B cell (primary cell): ENCODE measurements at regions of chr11 and their contacts with region 1.

Region 1: DNA sequence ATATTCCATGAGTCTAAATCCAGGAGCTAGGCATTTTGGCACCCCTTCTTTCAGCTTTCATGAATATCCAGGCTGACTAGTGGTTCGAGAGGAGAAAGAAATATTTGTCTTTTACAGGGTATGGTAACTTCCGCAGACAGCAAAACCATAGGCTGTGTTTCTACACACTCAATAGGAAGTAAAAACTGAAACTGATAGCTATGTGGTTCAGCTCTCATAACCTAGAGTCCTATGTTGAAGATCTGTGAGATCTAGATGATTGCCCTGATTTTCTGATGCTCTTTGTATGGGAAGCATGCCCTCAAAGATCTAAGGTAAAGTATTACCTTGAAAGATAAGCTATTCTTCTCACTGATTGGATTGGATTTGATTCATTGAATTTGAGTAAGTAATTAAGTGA is 118.3 kb downstream of the CD44 start:
- DNase-seq: peak; percentile 61
- ATAC-seq: peak; percentile 71
- H3K4me3 ChIP-seq: peak overlapping the region in 2 of 5 experiments; percentile 36 to 59
- H3K4me3 Mint-ChIP-seq: peak overlapping the region; percentile 46
- H3K27ac ChIP-seq: peak overlapping the region; percentile 56 to 63
- H3K27ac Mint-ChIP-seq: peak overlapping the region; percentile 54
- H3K4me1 ChIP-seq: peaks cover 12 to 13% of the 10 kb centered on the region in 2 donors
- H3K4me1 Mint-ChIP-seq: peaks cover 16% of the 10 kb centered on the region
- H3K27me3 ChIP-seq: no peaks in the 10 kb centered on the region
- H3K27me3 Mint-ChIP-seq: no peaks in the 10 kb centered on the region
- CTCF ChIP-seq: no peak

Region 2: GRCh38 chr11:35237860-35238715 is 19.2 kb before region 1 on chr11:
- CTCF ChIA-PET with region 1: interaction called, 6 read pairs
- POLR2A ChIA-PET with region 1: interaction called, 3 read pairs
- intact Hi-C with region 1: loop called (anchors 2 kb)
- DNase-seq: peak; percentile 81
- ATAC-seq: no peak
- H3K4me3 ChIP-seq: no peak overlapping the region
- H3K4me3 Mint-ChIP-seq: no peak overlapping the region
- H3K27ac ChIP-seq: no peak overlapping the region
- H3K27ac Mint-ChIP-seq: no peak overlapping the region
- H3K4me1 ChIP-seq: peaks cover 6 to 11% of the 10 kb centered on the region in 2 donors
- H3K4me1 Mint-ChIP-seq: peaks cover 22% of the 10 kb centered on the region
- H3K27me3 ChIP-seq: no peaks in the 10 kb centered on the region
- H3K27me3 Mint-ChIP-seq: no peaks in the 10 kb centered on the region
- CTCF ChIP-seq: peak; percentile 90

Region 3: DNA sequence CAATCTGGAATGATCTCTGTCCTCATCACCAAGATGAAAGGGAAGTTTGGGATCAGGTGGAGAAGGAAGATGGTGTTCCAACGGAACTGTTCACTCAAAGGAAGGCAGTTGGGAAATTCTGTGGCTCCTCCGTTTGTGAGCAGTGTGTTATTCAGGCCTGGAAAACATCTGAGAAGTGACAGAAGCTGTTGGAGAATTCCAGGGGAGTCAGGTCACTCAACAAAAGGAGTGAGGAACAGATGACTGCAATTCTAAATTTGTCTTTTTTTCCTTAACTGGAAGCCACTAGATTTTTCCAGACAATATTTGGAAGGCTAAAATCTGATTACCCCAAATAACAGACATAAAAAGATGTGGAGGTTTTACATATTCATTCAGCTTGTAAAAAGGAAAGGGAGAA is 10.5 kb before region 1 on chr11:
- CTCF ChIA-PET with region 1: interaction called, 10 read pairs
- POLR2A ChIA-PET with region 1: no interaction called
- intact Hi-C with region 1: loop called (anchors 2 kb)
- DNase-seq: no peak
- ATAC-seq: no peak
- H3K4me3 ChIP-seq: no peak overlapping the region
- H3K4me3 Mint-ChIP-seq: no peak overlapping the region
- H3K27ac ChIP-seq: no peak overlapping the region
- H3K27ac Mint-ChIP-seq: no peak overlapping the region
- H3K4me1 ChIP-seq: no peaks in the 10 kb centered on the region
- H3K4me1 Mint-ChIP-seq: no peaks in the 10 kb centered on the region
- H3K27me3 ChIP-seq: no peaks in the 10 kb centered on the region
- H3K27me3 Mint-ChIP-seq: peaks cover 2% of the 10 kb centered on the region
- CTCF ChIP-seq: no peak

Region 4: DNA sequence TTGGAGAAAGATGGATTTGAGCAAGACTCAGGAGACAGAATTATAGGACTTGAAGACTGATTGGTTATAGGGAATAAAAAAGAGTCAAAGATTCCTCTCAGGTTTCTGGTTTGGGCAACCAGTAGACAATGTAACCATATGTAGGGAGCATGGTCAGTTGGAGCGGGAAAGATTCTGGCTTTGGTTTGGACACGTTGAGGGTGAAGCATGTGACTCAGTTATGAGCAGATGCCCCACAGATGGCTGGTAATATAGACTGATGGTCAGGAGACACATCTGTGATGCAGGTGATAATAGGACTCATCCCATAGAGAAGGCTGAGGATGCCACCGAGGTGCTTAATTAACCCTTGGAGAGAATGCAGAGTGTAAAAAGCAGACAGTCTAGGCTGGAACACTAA is 13.8 kb after region 1 on chr11:
- CTCF ChIA-PET with region 1: interaction called, 3 read pairs
- POLR2A ChIA-PET with region 1: no interaction called
- intact Hi-C with region 1: loop called (anchors 1 kb)
- DNase-seq: no peak
- ATAC-seq: no peak
- H3K4me3 ChIP-seq: no peak overlapping the region
- H3K4me3 Mint-ChIP-seq: no peak overlapping the region
- H3K27ac ChIP-seq: no peak overlapping the region
- H3K27ac Mint-ChIP-seq: no peak overlapping the region
- H3K4me1 ChIP-seq: peaks cover 16 to 17% of the 10 kb centered on the region in 2 donors
- H3K4me1 Mint-ChIP-seq: peaks cover 34% of the 10 kb centered on the region
- H3K27me3 ChIP-seq: no peaks in the 10 kb centered on the region
- H3K27me3 Mint-ChIP-seq: no peaks in the 10 kb centered on the region
- CTCF ChIP-seq: no peak

Region 5: DNA sequence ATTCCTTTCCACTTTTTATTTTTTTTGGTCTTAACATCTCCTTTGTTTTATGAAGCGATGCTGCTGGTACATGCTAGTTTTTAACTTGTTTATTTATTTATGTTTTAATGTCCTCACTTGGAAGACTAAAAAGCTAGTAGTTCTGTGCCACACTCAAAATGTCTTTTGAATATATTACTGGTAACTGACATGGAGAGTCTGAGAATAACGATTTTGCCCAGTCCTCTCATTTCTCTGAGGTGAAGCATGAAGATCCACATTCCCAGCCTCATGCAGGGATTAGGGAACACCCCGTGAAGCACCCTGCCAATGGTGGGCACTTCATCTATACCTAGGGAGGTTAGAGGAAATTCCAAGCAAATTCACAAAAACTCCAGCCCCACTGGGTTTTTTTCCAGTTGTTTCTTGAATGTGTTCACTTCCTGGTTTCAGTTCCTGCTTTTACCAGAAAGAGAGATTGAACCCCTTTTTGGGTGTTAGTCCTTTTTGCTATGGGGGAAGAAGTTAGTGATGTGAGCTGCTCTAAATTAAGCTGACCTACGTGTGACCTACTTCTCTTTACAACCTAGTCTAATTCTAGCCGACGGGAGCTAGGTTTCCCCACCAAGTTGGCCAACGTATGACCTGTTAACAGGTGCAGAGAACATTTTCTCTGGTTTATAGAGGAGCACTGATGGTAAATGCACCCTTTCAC is 55.9 kb after region 1 on chr11:
- CTCF ChIA-PET with region 1: interaction called, 3 read pairs
- POLR2A ChIA-PET with region 1: no interaction called
- intact Hi-C with region 1: loop called (anchors 10 kb)
- DNase-seq: peak; percentile 84
- ATAC-seq: peak; percentile 91
- H3K4me3 ChIP-seq: peak overlapping the region in 2 of 5 experiments; percentile 20 to 42
- H3K4me3 Mint-ChIP-seq: peak overlapping the region; percentile 63
- H3K27ac ChIP-seq: peak overlapping the region; percentile 92 to 93
- H3K27ac Mint-ChIP-seq: peak overlapping the region; percentile 86
- H3K4me1 ChIP-seq: peaks cover 43 to 61% of the 10 kb centered on the region in 2 donors
- H3K4me1 Mint-ChIP-seq: peaks cover 56% of the 10 kb centered on the region
- H3K27me3 ChIP-seq: no peaks in the 10 kb centered on the region
- H3K27me3 Mint-ChIP-seq: no peaks in the 10 kb centered on the region
- CTCF ChIP-seq: no peak

Region 6: DNA sequence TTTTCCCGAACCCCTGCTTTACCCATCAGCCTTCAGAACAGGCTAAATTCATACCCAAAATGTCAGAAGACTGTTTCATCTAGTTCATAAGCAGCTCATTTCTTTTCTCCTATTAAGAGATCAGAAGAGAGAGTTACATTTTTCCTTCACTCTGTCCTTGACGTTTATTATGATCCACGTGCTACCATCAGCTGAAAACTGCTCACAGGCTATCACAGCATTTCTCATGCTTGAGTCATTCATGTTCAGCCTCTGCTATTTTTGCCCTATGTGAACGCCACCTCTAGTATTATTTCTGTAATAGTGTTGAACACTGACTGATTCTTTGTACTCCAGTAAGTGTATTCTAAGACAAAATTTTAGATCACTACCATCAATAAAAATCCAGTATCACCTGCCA is 110.2 kb after region 1 on chr11:
- CTCF ChIA-PET with region 1: no interaction called
- POLR2A ChIA-PET with region 1: no interaction called
- intact Hi-C with region 1: no loop called
- DNase-seq: no peak
- ATAC-seq: no peak
- H3K4me3 ChIP-seq: no peak overlapping the region
- H3K4me3 Mint-ChIP-seq: no peak overlapping the region
- H3K27ac ChIP-seq: no peak overlapping the region
- H3K27ac Mint-ChIP-seq: no peak overlapping the region
- H3K4me1 ChIP-seq: no peaks in the 10 kb centered on the region
- H3K4me1 Mint-ChIP-seq: no peaks in the 10 kb centered on the region
- H3K27me3 ChIP-seq: peaks cover 0 to 3% (median 0%) of the 10 kb centered on the region in 4 experiments
- H3K27me3 Mint-ChIP-seq: peaks cover 4% of the 10 kb centered on the region
- CTCF ChIP-seq: no peak